ENCODE measurements at regions of chrX and their contacts with region 1.

Region 1: DNA sequence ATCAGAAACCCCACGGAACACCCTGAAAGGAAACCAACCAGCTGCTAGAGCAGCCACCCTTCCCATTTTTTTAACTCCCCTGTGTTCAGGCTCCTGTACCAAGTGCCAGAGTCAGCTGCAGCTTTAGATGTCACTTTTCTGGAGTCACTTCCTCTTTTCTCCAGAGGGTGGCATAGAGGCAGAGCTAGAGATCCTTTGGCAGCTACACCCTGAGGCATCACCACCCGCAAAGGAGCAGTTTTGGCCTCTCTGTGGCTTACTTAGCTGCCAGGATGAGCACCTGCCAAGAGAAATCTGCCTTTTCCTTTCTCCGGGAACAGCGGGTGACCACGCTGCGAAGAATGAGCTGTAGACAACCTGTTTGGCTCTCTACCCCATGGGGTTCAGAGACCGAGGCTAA is 58.0 kb upstream of the CHRDL1 start:
- DNase-seq: no peak
- CTCF ChIP-seq: no peak

Region 2: DNA sequence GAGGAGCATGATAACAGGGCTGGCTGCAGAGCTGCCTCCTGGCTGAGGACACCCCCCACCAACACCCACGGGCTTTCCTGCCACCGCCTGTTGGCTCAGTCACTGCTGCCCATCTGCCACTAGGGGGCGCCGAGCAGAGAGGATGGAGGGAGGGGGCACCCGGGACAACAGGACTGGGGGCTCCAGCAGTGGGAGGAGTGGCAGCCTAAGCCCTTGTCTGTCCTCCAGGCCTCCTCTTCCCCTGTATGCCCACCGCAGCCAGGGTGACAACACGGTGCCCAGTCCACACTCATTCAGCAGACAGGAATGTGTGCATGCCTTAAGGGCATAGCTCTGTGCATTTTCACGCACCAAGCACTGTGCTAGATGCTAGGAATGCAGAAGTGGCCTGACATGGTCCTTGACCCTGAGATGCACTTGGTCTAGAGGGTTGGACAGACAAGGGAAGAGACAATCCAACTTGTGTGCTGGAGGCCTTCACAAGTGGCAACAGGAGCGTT is 685.6 kb before region 1 on chrX:
- in situ Hi-C with region 1: loop called (anchors 25 kb)
- DNase-seq: peak; percentile 50
- CTCF ChIP-seq: peak; percentile 62

Region 3: DNA sequence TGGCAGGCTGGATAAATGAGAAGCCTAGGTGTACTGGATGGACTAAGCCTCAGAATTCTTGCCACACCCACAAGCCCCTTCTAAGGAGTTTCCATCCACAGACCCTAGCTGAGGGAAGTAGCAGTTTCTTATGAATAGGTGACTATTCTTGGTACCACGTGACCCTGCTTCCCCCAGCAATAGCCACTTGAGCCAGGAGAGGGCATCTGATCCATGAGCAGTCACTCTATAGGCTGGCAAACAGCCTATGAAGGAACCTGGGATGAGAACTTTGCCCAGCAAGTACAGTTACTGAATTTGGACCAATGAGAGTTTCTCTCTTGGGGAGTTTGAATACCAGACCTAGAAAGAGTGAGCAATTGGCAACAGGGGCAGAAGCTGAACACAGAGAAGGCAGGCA is 411.0 kb before region 1 on chrX:
- in situ Hi-C with region 1: loop called (anchors 10 kb)
- DNase-seq: peak; percentile 13
- CTCF ChIP-seq: no peak

Measured in GM13976 (cell line).